HCT116 (cell line): ENCODE measurements at regions of chr12 and their contacts with region 1.

Region 1: GRCh38 chr12:75658901-75659383 is 147.5 kb upstream of the KRR1 start:
- DNase-seq: peak; percentile 85
- ATAC-seq: peak; percentile 48
- H3K4me3 ChIP-seq: no peak overlapping the region
- H3K27ac ChIP-seq: peak overlapping the region; percentile 99
- H3K4me1 ChIP-seq: peaks cover 78 to 99% of the 10 kb centered on the region in 2 experiments
- H3K27me3 ChIP-seq: no peaks in the 10 kb centered on the region
- CTCF ChIP-seq: no peak
- POLR2A ChIP-seq: no peak
- RAD21 ChIP-seq: 0 out of 2 replicates have a peak, but pooled peaks have one; percentile 16

Region 2: DNA sequence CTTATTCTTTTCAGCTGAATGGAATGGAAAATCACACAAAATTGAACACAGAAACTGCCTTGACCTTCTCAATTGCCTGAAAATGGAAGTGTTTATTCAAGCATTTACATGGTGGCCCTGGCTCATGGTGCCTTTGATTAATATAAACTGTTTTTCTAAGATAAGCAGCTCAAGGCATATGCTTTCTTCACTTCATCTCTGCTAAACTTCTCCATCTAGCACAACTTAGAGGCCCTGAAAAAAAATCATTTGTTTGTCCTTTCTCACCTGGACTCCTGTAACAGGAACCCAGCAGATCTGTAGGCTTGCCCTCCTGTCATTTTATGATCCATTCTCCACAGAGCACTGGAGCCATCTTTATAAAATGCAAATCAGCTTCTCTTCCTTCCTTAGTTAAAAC is 30.0 kb before region 1 on chr12:
- CTCF ChIA-PET with region 1: no interaction called
- POLR2A ChIA-PET with region 1: interaction called, 38 read pairs
- RAD21 ChIA-PET with region 1: no interaction called
- intact Hi-C with region 1: no loop called
- DNase-seq: no peak
- ATAC-seq: no peak
- H3K4me3 ChIP-seq: no peak overlapping the region
- H3K27ac ChIP-seq: peak overlapping the region; percentile 99
- H3K4me1 ChIP-seq: peaks cover 24 to 46% of the 10 kb centered on the region in 2 experiments
- H3K27me3 ChIP-seq: no peaks in the 10 kb centered on the region
- CTCF ChIP-seq: no peak
- POLR2A ChIP-seq: no peak
- RAD21 ChIP-seq: no peak

Region 3: DNA sequence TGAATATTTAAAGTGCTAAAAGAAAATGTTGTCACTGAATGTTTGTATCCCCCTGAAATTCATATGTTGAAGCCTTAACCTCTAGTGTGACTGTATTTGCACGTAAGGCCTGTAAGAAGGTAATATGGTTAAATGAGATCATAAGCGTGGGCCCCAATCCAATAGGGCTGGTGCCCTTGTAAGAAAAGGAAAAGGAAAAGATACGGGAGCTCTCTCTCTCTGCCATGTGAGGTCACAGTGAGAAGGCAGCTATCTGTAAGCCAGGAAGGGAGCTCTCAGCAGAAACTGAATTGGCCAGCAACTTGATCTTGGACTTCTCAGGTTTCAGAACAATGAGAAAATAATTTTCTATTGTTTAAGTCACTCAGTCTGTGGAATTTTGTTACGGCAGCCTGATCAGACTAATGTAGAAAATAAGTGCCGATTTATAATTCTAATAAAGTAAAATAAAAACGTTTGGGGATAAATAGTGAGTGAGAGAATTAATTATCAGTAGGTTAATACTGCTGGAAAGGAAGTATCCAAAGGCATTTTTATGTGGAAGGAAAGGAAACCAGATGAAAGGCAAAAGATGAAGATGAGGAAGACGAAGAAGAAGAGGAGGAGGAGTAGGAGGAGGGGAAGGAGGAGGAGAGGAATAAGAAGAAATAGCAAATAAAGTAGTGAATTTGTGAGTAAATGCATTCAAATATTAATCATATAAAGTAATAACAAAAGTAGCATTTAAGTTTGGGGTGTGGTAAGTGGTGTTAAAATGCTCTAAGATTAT is 41.0 kb after region 1 on chr12:
- CTCF ChIA-PET with region 1: no interaction called
- POLR2A ChIA-PET with region 1: interaction called, 42 read pairs
- RAD21 ChIA-PET with region 1: interaction called, 3 to 5 read pairs
- intact Hi-C with region 1: loop called (anchors 2 kb)
- DNase-seq: no peak
- ATAC-seq: peak; percentile 27
- H3K4me3 ChIP-seq: 0 out of 4 replicates have a peak overlapping the region, but pooled peaks of 1 of the 2 experiments have one; percentile 17
- H3K27ac ChIP-seq: peak overlapping the region; percentile 100
- H3K4me1 ChIP-seq: peaks cover 92 to 100% of the 10 kb centered on the region in 2 experiments
- H3K27me3 ChIP-seq: no peaks in the 10 kb centered on the region
- CTCF ChIP-seq: no peak
- POLR2A ChIP-seq: peak; percentile 2
- RAD21 ChIP-seq: peak; percentile 24; the same call in 1 of the 2 replicates

Region 4: DNA sequence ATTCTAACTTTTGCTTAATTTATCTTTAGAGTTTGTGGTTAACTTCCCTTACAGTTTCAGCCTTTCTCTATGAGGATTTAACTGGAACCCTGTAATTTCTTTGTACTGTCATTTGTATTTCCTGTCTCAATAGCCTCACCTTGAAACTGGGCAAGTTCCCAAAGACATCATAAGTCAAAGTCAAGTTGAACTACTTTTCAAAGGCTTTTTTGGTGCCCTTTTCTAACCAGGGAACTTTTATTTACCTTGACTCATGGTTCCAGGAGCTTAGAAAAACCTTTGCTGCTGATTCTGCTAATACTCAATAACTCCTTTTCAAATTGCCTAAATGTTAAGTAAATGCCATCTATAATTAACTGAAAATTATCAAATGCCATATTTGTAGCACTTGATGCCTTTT is 53.3 kb after region 1 on chr12:
- CTCF ChIA-PET with region 1: no interaction called
- POLR2A ChIA-PET with region 1: interaction called, 89 read pairs
- RAD21 ChIA-PET with region 1: no interaction called
- intact Hi-C with region 1: no loop called
- DNase-seq: peak; percentile 95
- ATAC-seq: peak; percentile 17
- H3K4me3 ChIP-seq: no peak overlapping the region; a peak in 1 of 4 replicates
- H3K27ac ChIP-seq: peak overlapping the region; percentile 100
- H3K4me1 ChIP-seq: peaks cover 89 to 98% of the 10 kb centered on the region in 2 experiments
- H3K27me3 ChIP-seq: no peaks in the 10 kb centered on the region
- CTCF ChIP-seq: no peak
- POLR2A ChIP-seq: no peak
- RAD21 ChIP-seq: peak; percentile 44

Region 5: DNA sequence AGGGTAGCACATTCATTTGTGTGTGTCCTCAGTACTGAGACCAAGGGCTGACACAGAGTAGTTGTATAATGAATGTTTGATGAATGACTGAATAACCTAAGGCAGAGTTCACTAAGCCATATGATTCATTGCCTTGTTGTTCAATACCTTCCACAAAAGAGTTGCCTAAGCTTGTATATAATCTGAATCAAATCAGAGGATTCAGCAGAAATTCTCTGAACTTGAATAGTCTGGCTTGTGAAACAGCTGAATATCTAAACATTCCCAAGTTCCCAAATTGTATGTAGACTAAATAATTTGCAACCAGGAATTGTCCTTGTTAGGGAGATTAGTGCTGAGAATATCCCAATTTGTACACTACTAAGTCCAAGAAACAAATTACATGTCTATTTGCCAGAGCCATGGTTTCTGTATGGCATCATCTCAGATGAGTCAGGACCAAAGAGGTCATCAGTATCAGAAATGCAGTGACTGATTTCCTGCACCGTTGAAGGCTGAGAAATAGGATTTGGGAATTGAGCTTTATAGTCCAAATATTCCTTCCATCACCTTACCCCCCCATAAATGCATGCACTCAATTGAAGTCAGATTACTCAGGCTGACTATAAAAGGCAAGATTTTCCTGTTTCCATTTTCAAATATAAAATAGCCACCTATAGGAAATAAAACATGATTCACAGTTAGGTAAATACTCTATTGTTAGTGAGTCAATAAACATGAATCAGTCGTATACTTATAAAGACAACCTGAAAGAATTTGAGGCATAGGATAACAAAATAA is 203.9 kb after region 1 on chr12:
- CTCF ChIA-PET with region 1: no interaction called
- POLR2A ChIA-PET with region 1: interaction called, 3 read pairs
- RAD21 ChIA-PET with region 1: no interaction called
- intact Hi-C with region 1: loop called (anchors 5 kb)
- DNase-seq: peak; percentile 84
- ATAC-seq: peak; percentile 80
- H3K4me3 ChIP-seq: no peak overlapping the region
- H3K27ac ChIP-seq: peak overlapping the region; percentile 87
- H3K4me1 ChIP-seq: peaks cover 46 to 91% of the 10 kb centered on the region in 2 experiments
- H3K27me3 ChIP-seq: no peaks in the 10 kb centered on the region
- CTCF ChIP-seq: no peak
- POLR2A ChIP-seq: no peak
- RAD21 ChIP-seq: 0 out of 2 replicates have a peak, but pooled peaks have one; percentile 20

Region 6: GRCh38 chr12:76020731-76021672 is 362.1 kb after region 1 on chr12:
- CTCF ChIA-PET with region 1: no interaction called
- POLR2A ChIA-PET with region 1: interaction called, 3 read pairs
- RAD21 ChIA-PET with region 1: no interaction called
- intact Hi-C with region 1: loop called (anchors 2 kb)
- DNase-seq: peak; percentile 84
- ATAC-seq: peak; percentile 61
- H3K4me3 ChIP-seq: no peak overlapping the region
- H3K27ac ChIP-seq: peak overlapping the region; percentile 88
- H3K4me1 ChIP-seq: peaks cover 49 to 88% of the 10 kb centered on the region in 2 experiments
- H3K27me3 ChIP-seq: no peaks in the 10 kb centered on the region
- CTCF ChIP-seq: no peak
- POLR2A ChIP-seq: no peak
- RAD21 ChIP-seq: peak; percentile 14; the same call in 1 of the 2 replicates

Region 7: GRCh38 chr12:76348079-76348901 is 689.3 kb after region 1 on chr12 and contains the start of gene BBS10:
- CTCF ChIA-PET with region 1: no interaction called
- POLR2A ChIA-PET with region 1: interaction called, 4 read pairs
- RAD21 ChIA-PET with region 1: no interaction called
- intact Hi-C with region 1: loop called (anchors 2 kb)
- DNase-seq: peak; percentile 83
- ATAC-seq: peak; percentile 91
- H3K4me3 ChIP-seq: peak within 1 kb of the TSS; percentile 77 to 88
- H3K27ac ChIP-seq: peak within 1 kb of the TSS; percentile 86
- H3K4me1 ChIP-seq: peaks cover 23 to 48% of the 10 kb centered on the region in 2 experiments; a peak in 3 of 4 replicates
- H3K27me3 ChIP-seq: no peaks in the 10 kb centered on the region
- CTCF ChIP-seq: peak; percentile 33 to 63 (median 49); a peak in 4 of 6 replicates
- POLR2A ChIP-seq: peak; percentile 5
- RAD21 ChIP-seq: peak; percentile 44
- total RNA-seq, gene BBS10: 27.1 TPM